ENCODE measurements at regions of chr1 and their contacts with region 1.

Region 1: DNA sequence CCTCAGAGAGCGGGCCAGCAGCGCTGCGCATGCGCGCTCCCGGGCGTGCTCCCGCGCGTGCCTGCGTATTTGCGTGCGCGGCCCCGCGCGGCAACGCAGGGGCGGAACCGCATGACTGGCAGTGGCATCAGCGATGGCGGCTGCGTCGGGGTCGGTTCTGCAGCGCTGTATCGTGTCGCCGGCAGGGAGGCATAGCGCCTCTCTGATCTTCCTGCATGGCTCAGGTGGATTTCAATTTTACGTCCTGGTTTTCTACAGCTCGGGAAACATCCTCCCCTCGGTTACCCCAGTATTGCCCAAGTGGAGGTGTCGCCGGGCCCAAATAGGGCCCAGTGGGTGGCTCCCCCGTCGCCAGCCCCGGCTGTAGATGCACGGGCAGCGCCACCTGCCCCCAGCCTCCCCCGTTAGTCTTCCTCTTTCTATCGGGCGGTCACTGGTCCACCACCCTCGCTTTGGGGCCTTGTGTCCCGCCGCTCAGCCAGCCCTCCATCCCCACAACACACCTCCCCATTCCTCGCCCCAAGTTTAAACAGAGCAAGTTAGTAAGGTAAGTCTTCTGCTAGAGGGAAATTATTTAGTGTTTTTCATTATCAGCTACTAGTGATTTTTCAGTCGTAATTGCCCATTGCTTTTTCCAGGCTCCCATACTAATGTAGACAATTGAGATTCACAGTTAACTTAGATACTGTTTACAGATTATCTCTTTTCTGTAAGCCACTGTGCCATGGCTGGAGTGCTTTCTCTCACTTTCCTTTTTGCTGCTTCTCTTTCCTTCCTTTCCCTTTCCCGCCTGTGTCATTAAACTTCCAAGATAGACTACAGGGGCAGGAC is at the start of gene LYPLAL1:
- DNase-seq: peak; percentile 86
- H3K4me3 Mint-ChIP-seq: peak within 1 kb of the TSS; percentile 99
- H3K27ac Mint-ChIP-seq: peak within 1 kb of the TSS; percentile 96
- H3K4me1 Mint-ChIP-seq: peaks cover 48% of the 10 kb centered on the region
- H3K27me3 Mint-ChIP-seq: no peaks in the 10 kb centered on the region
- total RNA-seq, gene LYPLAL1: 19.9 to 21.8 TPM

Region 2: GRCh38 chr1:217620814-217621213 is 1553.2 kb before region 1 on chr1:
- CTCF ChIA-PET with region 1: no interaction called
- intact Hi-C with region 1: loop called (anchors 10 kb)
- DNase-seq: no peak
- H3K4me3 Mint-ChIP-seq: no peak overlapping the region
- H3K27ac Mint-ChIP-seq: no peak overlapping the region
- H3K4me1 Mint-ChIP-seq: peaks cover 33% of the 10 kb centered on the region
- H3K27me3 Mint-ChIP-seq: no peaks in the 10 kb centered on the region

Region 3: GRCh38 chr1:218345673-218346390 is 828.1 kb before region 1 on chr1:
- CTCF ChIA-PET with region 1: no interaction called
- intact Hi-C with region 1: loop called (anchors 2 kb)
- DNase-seq: peak; percentile 17
- H3K4me3 Mint-ChIP-seq: no peak overlapping the region
- H3K27ac Mint-ChIP-seq: no peak overlapping the region
- H3K4me1 Mint-ChIP-seq: peaks cover 22% of the 10 kb centered on the region
- H3K27me3 Mint-ChIP-seq: peaks cover 55% of the 10 kb centered on the region

Region 4: GRCh38 chr1:219066631-219067349 is 107.2 kb before region 1 on chr1:
- CTCF ChIA-PET with region 1: no interaction called
- intact Hi-C with region 1: loop called (anchors 5 kb)
- DNase-seq: no peak
- H3K4me3 Mint-ChIP-seq: no peak overlapping the region
- H3K27ac Mint-ChIP-seq: no peak overlapping the region
- H3K4me1 Mint-ChIP-seq: peaks cover 7% of the 10 kb centered on the region
- H3K27me3 Mint-ChIP-seq: peaks cover 5% of the 10 kb centered on the region

Region 5: GRCh38 chr1:219159946-219160645 is 13.9 kb before region 1 on chr1:
- CTCF ChIA-PET with region 1: no interaction called
- intact Hi-C with region 1: no loop called
- DNase-seq: no peak
- H3K4me3 Mint-ChIP-seq: no peak overlapping the region
- H3K27ac Mint-ChIP-seq: no peak overlapping the region
- H3K4me1 Mint-ChIP-seq: no peaks in the 10 kb centered on the region
- H3K27me3 Mint-ChIP-seq: peaks cover 7% of the 10 kb centered on the region

Region 6: DNA sequence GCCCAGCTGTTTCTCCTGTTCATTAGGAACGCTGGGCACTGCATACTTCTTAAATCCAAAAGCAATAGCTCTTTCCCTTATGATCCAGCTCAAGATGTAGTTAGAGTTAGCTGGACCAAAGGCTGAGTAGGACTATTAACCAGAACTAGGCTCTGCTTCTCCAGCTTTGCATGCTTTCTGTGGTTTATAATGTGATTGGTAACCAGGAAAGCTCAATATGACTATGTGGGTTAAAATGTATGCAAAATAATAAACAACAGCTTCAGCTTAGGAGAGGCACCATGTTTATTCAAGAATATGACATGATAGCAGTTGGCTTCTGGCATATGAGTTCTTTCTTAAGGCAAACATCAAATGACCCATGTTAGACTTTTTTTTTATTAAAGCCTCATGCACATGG is 73.5 kb after region 1 on chr1:
- CTCF ChIA-PET with region 1: no interaction called
- intact Hi-C with region 1: no loop called
- DNase-seq: no peak
- H3K4me3 Mint-ChIP-seq: no peak overlapping the region
- H3K27ac Mint-ChIP-seq: no peak overlapping the region
- H3K4me1 Mint-ChIP-seq: no peaks in the 10 kb centered on the region
- H3K27me3 Mint-ChIP-seq: no peaks in the 10 kb centered on the region

Region 7: GRCh38 chr1:219324629-219325367 is 150.8 kb after region 1 on chr1:
- CTCF ChIA-PET with region 1: no interaction called
- intact Hi-C with region 1: loop called (anchors 1 kb)
- DNase-seq: peak; percentile 30
- H3K4me3 Mint-ChIP-seq: no peak overlapping the region
- H3K27ac Mint-ChIP-seq: no peak overlapping the region
- H3K4me1 Mint-ChIP-seq: peaks cover 9% of the 10 kb centered on the region
- H3K27me3 Mint-ChIP-seq: peaks cover 4% of the 10 kb centered on the region

Region 8: GRCh38 chr1:219383281-219383680 is 209.3 kb after region 1 on chr1:
- CTCF ChIA-PET with region 1: no interaction called
- intact Hi-C with region 1: no loop called
- DNase-seq: no peak
- H3K4me3 Mint-ChIP-seq: no peak overlapping the region
- H3K27ac Mint-ChIP-seq: no peak overlapping the region
- H3K4me1 Mint-ChIP-seq: no peaks in the 10 kb centered on the region
- H3K27me3 Mint-ChIP-seq: no peaks in the 10 kb centered on the region

Region 9: DNA sequence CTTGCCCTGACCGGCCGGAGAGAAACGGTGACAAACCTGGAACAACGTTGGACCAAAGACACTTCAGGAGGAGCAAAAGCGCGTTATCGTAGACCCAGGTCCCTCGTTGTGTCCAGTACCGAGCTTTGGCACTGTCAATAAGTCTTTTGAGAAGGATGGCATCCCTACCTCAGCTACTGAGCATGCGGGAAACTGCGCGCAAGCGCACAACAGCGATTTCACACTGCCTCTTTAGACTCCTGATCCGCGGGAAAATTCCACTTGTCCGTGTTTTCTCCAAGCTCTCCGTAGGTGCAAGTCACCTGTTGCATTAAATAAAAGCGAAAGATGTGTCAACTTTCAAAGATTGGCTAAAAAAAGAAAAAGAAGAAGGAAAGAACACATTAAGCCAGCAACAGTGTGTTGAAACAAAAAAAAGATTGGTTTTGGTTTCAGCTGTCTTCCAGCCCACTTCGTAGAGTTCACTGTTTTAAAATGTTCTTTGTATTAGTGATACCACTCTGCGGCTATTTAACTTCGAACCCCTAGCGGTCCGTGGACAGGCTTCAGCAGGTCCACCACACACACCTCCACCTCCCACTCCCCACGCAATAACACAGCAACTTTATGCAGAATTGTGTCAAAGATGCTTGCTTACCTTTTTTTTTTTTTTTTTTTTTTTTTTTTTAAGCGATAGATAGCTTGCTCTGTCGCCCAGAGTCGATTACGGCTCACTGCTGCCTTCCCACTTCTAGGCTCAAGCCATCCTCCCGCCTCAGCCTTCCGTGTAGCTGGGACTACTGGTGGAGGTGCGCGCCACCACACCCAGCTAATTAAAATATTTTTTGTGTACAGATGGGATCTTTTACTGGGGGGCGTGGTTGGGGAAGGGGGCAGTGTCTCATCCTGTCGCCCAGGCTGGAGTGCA is 915.9 kb after region 1 on chr1 and contains the start of gene BPNT1:
- CTCF ChIA-PET with region 1: no interaction called
- intact Hi-C with region 1: loop called (anchors 1 kb)
- DNase-seq: peak; percentile 100
- H3K4me3 Mint-ChIP-seq: peak within 1 kb of the TSS; percentile 91
- H3K27ac Mint-ChIP-seq: peak within 1 kb of the TSS; percentile 85
- H3K4me1 Mint-ChIP-seq: peaks cover 12% of the 10 kb centered on the region
- H3K27me3 Mint-ChIP-seq: no peaks in the 10 kb centered on the region
- total RNA-seq, gene BPNT1: 18.5 to 21.3 TPM

Measured in activated naive CD4-positive, alpha-beta T cell treated with anti-CD3 and anti-CD28 coated beads for 36 hours (primary cell).